HCT116 (cell line): ENCODE measurements at regions of chr3 and their contacts with region 1.

Region 1: GRCh38 chr3:75727985-75728384 is 57.4 kb downstream of the ZNF717 start:
- DNase-seq: no peak
- ATAC-seq: no peak
- H3K4me3 ChIP-seq: no peak overlapping the region
- H3K27ac ChIP-seq: no peak overlapping the region
- H3K4me1 ChIP-seq: no peaks in the 10 kb centered on the region
- H3K27me3 ChIP-seq: no peaks in the 10 kb centered on the region
- CTCF ChIP-seq: no peak
- POLR2A ChIP-seq: no peak
- RAD21 ChIP-seq: no peak

Region 2: DNA sequence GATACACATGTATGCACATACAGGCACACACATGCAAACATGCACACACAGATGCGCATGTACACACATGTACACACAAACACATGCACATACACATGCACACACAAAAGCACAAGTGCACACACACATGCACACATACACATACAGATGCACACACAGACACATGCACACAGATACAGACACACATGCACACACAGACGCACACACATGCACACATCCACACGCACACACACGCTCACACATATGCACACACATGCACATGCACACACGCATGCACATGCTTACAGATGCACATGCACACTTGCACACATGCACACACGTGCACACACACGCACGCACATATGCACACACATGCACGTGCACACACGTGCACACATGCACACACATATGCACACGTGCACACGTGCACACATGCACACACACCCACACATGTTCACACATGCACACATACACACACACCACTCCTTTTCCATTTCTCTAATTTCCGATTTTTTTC is 347.7 kb before region 1 on chr3:
- CTCF ChIA-PET with region 1: no interaction called
- POLR2A ChIA-PET with region 1: no interaction called
- RAD21 ChIA-PET with region 1: no interaction called
- intact Hi-C with region 1: no loop called
- DNase-seq: no peak
- ATAC-seq: no peak
- H3K4me3 ChIP-seq: no peak overlapping the region
- H3K27ac ChIP-seq: no peak overlapping the region
- H3K4me1 ChIP-seq: no peaks in the 10 kb centered on the region
- H3K27me3 ChIP-seq: no peaks in the 10 kb centered on the region
- CTCF ChIP-seq: no peak
- POLR2A ChIP-seq: no peak
- RAD21 ChIP-seq: no peak

Region 3: GRCh38 chr3:76107935-76108570 is 380.1 kb after region 1 on chr3:
- CTCF ChIA-PET with region 1: no interaction called
- POLR2A ChIA-PET with region 1: no interaction called
- RAD21 ChIA-PET with region 1: no interaction called
- intact Hi-C with region 1: loop called (anchors 5 kb)
- DNase-seq: peak; percentile 0
- ATAC-seq: no peak
- H3K4me3 ChIP-seq: no peak overlapping the region
- H3K27ac ChIP-seq: no peak overlapping the region
- H3K4me1 ChIP-seq: no peaks in the 10 kb centered on the region
- H3K27me3 ChIP-seq: no peaks in the 10 kb centered on the region
- CTCF ChIP-seq: peak in 2 of 3 experiments; percentile 61 to 63; a peak in 4 of 6 replicates
- POLR2A ChIP-seq: no peak
- RAD21 ChIP-seq: 0 out of 2 replicates have a peak, but pooled peaks have one; percentile 10